Activated CD4-positive, alpha-beta T cell treated with anti-CD3 and anti-CD28 coated beads for 36 hours (primary cell): ENCODE measurements at regions of chr11 and their contacts with region 1.

Region 1: DNA sequence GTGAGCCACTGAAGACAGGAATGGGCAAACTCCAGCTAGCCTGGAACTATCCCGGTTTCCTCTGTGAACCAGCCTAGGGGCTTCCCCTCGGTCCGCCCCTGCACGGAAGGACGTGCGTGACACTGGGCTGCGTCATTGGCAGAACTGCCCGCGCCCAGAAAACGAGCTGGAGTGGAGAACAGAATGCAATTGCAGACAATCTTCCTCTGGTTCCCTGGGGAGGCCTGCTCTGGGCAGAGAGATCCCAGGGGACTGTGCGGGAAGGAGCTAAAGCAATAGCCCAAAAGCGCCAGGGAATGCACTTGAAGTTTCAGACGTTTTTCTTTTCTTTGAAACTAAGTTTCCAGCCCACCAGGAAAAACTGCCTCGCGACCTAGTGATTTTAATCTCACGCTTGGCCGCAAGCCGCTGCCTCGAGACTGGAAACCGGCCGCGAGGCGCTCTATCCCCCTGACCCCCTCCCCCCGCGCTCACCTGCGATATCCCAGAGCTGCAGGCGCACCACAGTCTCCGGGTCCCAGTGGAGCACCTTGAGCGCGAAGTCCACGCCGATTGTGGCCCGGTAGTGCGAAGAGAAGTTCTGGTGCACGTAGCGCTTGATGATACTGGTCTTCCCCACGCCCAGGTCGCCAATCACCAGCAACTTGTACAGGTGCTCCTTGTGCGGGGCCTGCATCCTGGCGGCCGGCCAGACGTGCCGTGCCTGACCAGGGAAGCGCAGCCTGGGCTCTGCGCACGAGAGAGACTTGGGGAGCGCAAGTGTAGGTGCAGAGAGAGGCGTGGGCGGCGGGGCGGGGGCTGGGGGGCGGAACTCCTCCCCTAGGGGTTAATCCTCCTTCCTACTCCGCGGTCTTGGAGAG is at the start of gene RAB38:
- DNase-seq: peak; percentile 83
- ATAC-seq: peak; percentile 64
- H3K4me3 Mint-ChIP-seq: peak within 1 kb of the TSS; percentile 71
- H3K27ac Mint-ChIP-seq: peak within 1 kb of the TSS; percentile 72
- H3K4me1 Mint-ChIP-seq: peaks cover 46% of the 10 kb centered on the region
- H3K27me3 Mint-ChIP-seq: peaks cover 14% of the 10 kb centered on the region
- total RNA-seq, gene RAB38: 2.9 to 3.1 TPM

Region 2: GRCh38 chr11:88301488-88302140 is 126.7 kb after region 1 on chr11:
- CTCF ChIA-PET with region 1: no interaction called
- POLR2A ChIA-PET with region 1: no interaction called
- intact Hi-C with region 1: loop called in 1 of 2 experiments (anchors 5 kb)
- DNase-seq: peak; percentile 16
- ATAC-seq: peak; percentile 54
- H3K4me3 Mint-ChIP-seq: no peak overlapping the region
- H3K27ac Mint-ChIP-seq: peak overlapping the region; percentile 89
- H3K4me1 Mint-ChIP-seq: peaks cover 33% of the 10 kb centered on the region
- H3K27me3 Mint-ChIP-seq: no peaks in the 10 kb centered on the region

Region 3: GRCh38 chr11:88357323-88358039 is 182.5 kb after region 1 on chr11:
- CTCF ChIA-PET with region 1: interaction called, 4 read pairs
- POLR2A ChIA-PET with region 1: no interaction called
- intact Hi-C with region 1: loop called (anchors 1 to 2 kb)
- DNase-seq: no peak
- ATAC-seq: peak; percentile 86
- H3K4me3 Mint-ChIP-seq: no peak overlapping the region
- H3K27ac Mint-ChIP-seq: peak overlapping the region; percentile 69
- H3K4me1 Mint-ChIP-seq: peaks cover 52% of the 10 kb centered on the region
- H3K27me3 Mint-ChIP-seq: no peaks in the 10 kb centered on the region

Region 4: GRCh38 chr11:88421530-88421929 is 246.6 kb after region 1 on chr11:
- CTCF ChIA-PET with region 1: interaction called, 3 read pairs
- POLR2A ChIA-PET with region 1: no interaction called
- intact Hi-C with region 1: loop called (anchors 1 to 5 kb)
- DNase-seq: peak; percentile 69
- ATAC-seq: peak; percentile 93
- H3K4me3 Mint-ChIP-seq: no peak overlapping the region
- H3K27ac Mint-ChIP-seq: peak overlapping the region; percentile 91
- H3K4me1 Mint-ChIP-seq: peaks cover 62% of the 10 kb centered on the region
- H3K27me3 Mint-ChIP-seq: no peaks in the 10 kb centered on the region

Region 5: DNA sequence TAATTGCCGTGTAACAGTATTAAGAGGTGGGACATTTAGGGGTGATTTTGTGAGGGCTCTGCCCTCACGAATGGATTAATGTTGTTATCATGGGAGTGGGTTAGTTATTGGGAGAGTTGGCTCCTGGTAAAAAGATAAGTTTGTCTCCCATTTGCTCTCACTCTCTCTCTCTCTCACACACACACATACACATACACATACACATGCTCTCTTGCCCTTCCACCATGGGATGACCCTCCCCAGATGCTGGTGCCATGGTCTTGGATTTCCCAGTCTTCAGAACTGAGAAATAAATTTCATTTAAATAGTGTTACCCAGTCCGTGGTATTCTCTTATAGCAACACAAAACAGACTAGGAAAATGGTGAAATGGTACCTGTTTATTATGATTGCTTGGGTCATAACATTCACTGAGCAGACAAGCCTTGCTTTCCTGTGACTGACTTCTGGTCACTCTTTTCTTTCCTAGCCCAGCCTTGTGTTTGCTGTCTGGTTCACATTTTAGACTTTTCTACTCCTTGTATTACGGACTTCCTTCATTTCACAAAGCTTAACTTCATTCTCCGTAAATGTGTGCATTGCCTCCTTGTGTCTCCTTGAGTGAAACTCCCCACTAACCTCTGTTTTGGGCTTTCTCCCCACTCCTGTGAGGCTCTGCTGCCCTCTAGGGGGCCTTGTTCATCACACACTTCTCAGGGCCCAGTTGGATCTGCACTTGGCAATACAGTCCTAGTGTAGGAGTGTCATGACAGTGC is 369.1 kb after region 1 on chr11:
- CTCF ChIA-PET with region 1: interaction called, 6 read pairs
- POLR2A ChIA-PET with region 1: no interaction called
- intact Hi-C with region 1: loop called (anchors 2 to 5 kb)
- DNase-seq: peak; percentile 88
- ATAC-seq: peak; percentile 99
- H3K4me3 Mint-ChIP-seq: no peak overlapping the region
- H3K27ac Mint-ChIP-seq: no peak overlapping the region
- H3K4me1 Mint-ChIP-seq: peaks cover 12% of the 10 kb centered on the region
- H3K27me3 Mint-ChIP-seq: no peaks in the 10 kb centered on the region